CD4-positive, alpha-beta memory T cell (primary cell): ENCODE measurements at regions of chr11 and their contacts with region 1.

Region 1: DNA sequence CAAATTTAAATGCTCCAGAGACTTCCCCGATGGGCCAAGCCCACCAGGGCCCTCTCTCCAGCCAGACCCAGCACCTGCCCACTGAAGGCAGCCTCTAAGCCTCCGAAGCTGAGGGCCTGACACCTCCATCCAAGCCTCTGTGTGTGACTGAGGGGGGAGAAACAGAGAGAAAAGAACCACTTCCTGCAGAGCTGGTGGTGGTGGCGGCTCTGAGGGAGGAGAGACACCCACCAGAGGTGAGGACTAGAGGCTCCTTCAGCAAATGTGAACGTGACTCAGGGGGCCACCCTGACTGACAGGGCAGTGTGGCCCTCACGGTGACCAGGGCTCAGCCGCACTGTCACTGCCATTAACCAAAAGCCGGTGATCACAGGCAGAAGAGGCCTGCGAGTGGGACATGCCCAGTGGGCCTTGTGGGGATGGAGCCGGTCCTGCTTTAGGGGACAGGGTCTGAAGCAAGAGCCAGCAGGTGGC is 31.0 kb upstream of the CD5 start:
- DNase-seq: peak; percentile 61 to 77 (median 72)
- H3K4me3 ChIP-seq: peak overlapping the region in 1 of 2 donors; percentile 21
- H3K4me3 Mint-ChIP-seq: peak overlapping the region; percentile 60 to 89 (median 79)
- H3K27ac ChIP-seq: peak overlapping the region; percentile 63
- H3K27ac Mint-ChIP-seq: peak overlapping the region; percentile 92 to 98 (median 96)
- H3K4me1 ChIP-seq: peaks cover 98% of the 10 kb centered on the region
- H3K4me1 Mint-ChIP-seq: peaks cover 50 to 92% (median 74%) of the 10 kb centered on the region in 4 donors
- H3K27me3 ChIP-seq: no peaks in the 10 kb centered on the region
- H3K27me3 Mint-ChIP-seq: no peaks in the 10 kb centered on the region

Region 2: GRCh38 chr11:60647087-60647486 is 424.2 kb before region 1 on chr11:
- CTCF ChIA-PET with region 1: no interaction called
- POLR2A ChIA-PET with region 1: no interaction called
- intact Hi-C with region 1: no loop called
- DNase-seq: no peak
- H3K4me3 ChIP-seq: no peak overlapping the region
- H3K4me3 Mint-ChIP-seq: no peak overlapping the region
- H3K27ac ChIP-seq: no peak overlapping the region
- H3K27ac Mint-ChIP-seq: no peak overlapping the region
- H3K4me1 ChIP-seq: no peaks in the 10 kb centered on the region
- H3K4me1 Mint-ChIP-seq: no peaks in the 10 kb centered on the region
- H3K27me3 ChIP-seq: no peaks in the 10 kb centered on the region
- H3K27me3 Mint-ChIP-seq: peaks cover 2 to 5% of the 10 kb centered on the region in 2 donors

Region 3: DNA sequence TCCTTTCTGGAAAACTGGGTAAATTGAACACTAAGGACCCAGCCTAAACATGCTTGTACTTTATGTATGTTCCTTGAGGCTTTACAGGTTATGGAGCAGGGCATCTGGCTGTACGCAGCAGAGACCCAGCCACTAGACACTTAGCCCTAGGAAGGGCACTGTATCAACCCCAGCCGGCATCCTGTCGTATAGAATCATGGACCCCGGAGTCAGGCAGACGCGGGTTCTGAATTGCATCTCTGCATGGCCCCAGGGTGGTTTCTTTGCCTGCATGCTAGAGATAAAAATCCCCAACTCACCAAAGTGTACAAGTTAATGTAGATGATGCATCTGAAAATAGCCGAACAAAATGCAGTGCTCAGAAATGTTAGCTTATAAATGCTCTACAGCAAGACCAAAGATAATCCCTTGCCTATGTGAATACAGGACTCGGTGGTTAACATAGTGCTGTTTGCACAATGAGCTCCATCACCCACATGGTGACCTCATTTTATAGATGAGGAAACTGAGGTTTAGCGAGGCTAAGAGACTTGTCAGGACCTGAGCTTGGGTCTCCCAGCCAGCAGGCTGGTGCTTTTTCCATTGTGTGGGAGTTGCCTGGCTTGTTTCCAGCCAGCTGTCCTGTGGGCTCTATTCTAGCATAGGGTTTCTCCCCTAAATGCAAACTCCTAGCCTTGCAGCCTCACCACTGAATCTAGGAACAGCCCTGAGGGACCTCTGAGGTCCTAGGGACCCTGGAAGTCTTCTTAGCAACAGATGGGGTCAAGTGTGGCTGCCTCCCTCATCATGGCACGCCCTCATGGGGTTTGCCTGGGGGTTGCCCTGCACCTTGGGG is 92.5 kb before region 1 on chr11:
- CTCF ChIA-PET with region 1: no interaction called
- POLR2A ChIA-PET with region 1: interaction called, 157 read pairs
- intact Hi-C with region 1: no loop called
- DNase-seq: peak; percentile 49 to 82 (median 52)
- H3K4me3 ChIP-seq: peak overlapping the region in 1 of 2 donors; percentile 28
- H3K4me3 Mint-ChIP-seq: peak overlapping the region; percentile 81 to 98 (median 86)
- H3K27ac ChIP-seq: peak overlapping the region; percentile 92
- H3K27ac Mint-ChIP-seq: peak overlapping the region; percentile 88 to 100 (median 97)
- H3K4me1 ChIP-seq: peaks cover 91% of the 10 kb centered on the region
- H3K4me1 Mint-ChIP-seq: peaks cover 55 to 98% (median 77%) of the 10 kb centered on the region in 4 donors
- H3K27me3 ChIP-seq: no peaks in the 10 kb centered on the region
- H3K27me3 Mint-ChIP-seq: no peaks in the 10 kb centered on the region

Region 4: GRCh38 chr11:61004180-61004611 is 67.0 kb before region 1 on chr11:
- CTCF ChIA-PET with region 1: interaction called, 3 read pairs
- POLR2A ChIA-PET with region 1: interaction called, 13 read pairs
- intact Hi-C with region 1: no loop called
- DNase-seq: peak in 3 of 5 donors; percentile 47 to 76 (median 60)
- H3K4me3 ChIP-seq: peak overlapping the region; percentile 5 to 14
- H3K4me3 Mint-ChIP-seq: peak overlapping the region; percentile 63 to 87 (median 83)
- H3K27ac ChIP-seq: peak overlapping the region; percentile 54
- H3K27ac Mint-ChIP-seq: peak overlapping the region; percentile 89 to 97 (median 95)
- H3K4me1 ChIP-seq: peaks cover 93% of the 10 kb centered on the region
- H3K4me1 Mint-ChIP-seq: peaks cover 51 to 90% (median 66%) of the 10 kb centered on the region in 4 donors
- H3K27me3 ChIP-seq: no peaks in the 10 kb centered on the region
- H3K27me3 Mint-ChIP-seq: no peaks in the 10 kb centered on the region

Region 5: GRCh38 chr11:61091373-61092279 is 20.4 kb after region 1 on chr11:
- CTCF ChIA-PET with region 1: interaction called, 4 read pairs
- POLR2A ChIA-PET with region 1: interaction called, 12 read pairs
- intact Hi-C with region 1: no loop called
- DNase-seq: peak in 1 of 5 donors; percentile 74
- H3K4me3 ChIP-seq: peak overlapping the region in 1 of 2 donors; percentile 16
- H3K4me3 Mint-ChIP-seq: peak overlapping the region; percentile 71 to 89 (median 80)
- H3K27ac ChIP-seq: peak overlapping the region; percentile 87
- H3K27ac Mint-ChIP-seq: peak overlapping the region; percentile 95 to 99 (median 97)
- H3K4me1 ChIP-seq: peaks cover 52% of the 10 kb centered on the region
- H3K4me1 Mint-ChIP-seq: peaks cover 44 to 75% (median 50%) of the 10 kb centered on the region in 4 donors
- H3K27me3 ChIP-seq: no peaks in the 10 kb centered on the region
- H3K27me3 Mint-ChIP-seq: no peaks in the 10 kb centered on the region

Region 6: DNA sequence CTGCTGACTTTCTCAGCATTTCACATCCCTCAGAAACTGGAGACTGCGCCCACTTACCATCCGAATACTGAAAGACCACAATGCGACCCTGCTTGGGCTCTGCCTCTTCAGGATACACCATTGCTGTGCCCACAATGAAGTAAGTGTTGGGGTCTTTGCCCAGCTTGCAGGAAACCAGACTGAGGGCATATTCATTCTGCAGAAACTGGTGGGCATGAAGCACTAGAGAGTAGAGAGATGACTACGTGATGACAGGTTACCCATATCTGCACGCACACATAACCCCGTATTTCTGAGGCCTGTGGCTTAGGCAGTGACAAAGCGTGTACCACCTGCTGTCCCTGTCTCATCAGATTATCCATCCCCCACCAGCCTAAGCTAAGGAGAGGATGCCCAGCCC is 238.5 kb after region 1 on chr11:
- CTCF ChIA-PET with region 1: no interaction called
- POLR2A ChIA-PET with region 1: no interaction called
- intact Hi-C with region 1: no loop called
- DNase-seq: no peak
- H3K4me3 ChIP-seq: no peak overlapping the region
- H3K4me3 Mint-ChIP-seq: no peak overlapping the region
- H3K27ac ChIP-seq: no peak overlapping the region
- H3K27ac Mint-ChIP-seq: no peak overlapping the region
- H3K4me1 ChIP-seq: no peaks in the 10 kb centered on the region
- H3K4me1 Mint-ChIP-seq: no peaks in the 10 kb centered on the region
- H3K27me3 ChIP-seq: no peaks in the 10 kb centered on the region
- H3K27me3 Mint-ChIP-seq: no peaks in the 10 kb centered on the region

Region 7: GRCh38 chr11:62771144-62772021 is 1700.1 kb after region 1 on chr11 and contains the start of gene TAF6L:
- CTCF ChIA-PET with region 1: no interaction called
- POLR2A ChIA-PET with region 1: no interaction called
- intact Hi-C with region 1: no loop called
- DNase-seq: peak; percentile 86 to 92 (median 88)
- H3K4me3 ChIP-seq: peak within 1 kb of the TSS; percentile 67 to 83
- H3K4me3 Mint-ChIP-seq: peak within 1 kb of the TSS; percentile 87 to 97 (median 92)
- H3K27ac ChIP-seq: peak within 1 kb of the TSS; percentile 82
- H3K27ac Mint-ChIP-seq: peak within 1 kb of the TSS; percentile 92 to 99 (median 97)
- H3K4me1 ChIP-seq: peaks cover 24% of the 10 kb centered on the region
- H3K4me1 Mint-ChIP-seq: peaks cover 14 to 32% (median 22%) of the 10 kb centered on the region in 4 donors
- H3K27me3 ChIP-seq: no peaks in the 10 kb centered on the region
- H3K27me3 Mint-ChIP-seq: no peaks in the 10 kb centered on the region
- total RNA-seq, gene TAF6L: 26.3 to 34.0 TPM